Sigmoid colon (tissue), 7 donors: ENCODE measurements at regions of chr4 and their contacts with region 1.

Region 1: GRCh38 chr4:185471235-185472102 is at the start of gene CCDC110:
- DNase-seq: peak; percentile 99
- H3K4me3 ChIP-seq: peak within 1 kb of the TSS; percentile 52 to 95 (median 78)
- H3K27ac ChIP-seq: peak within 1 kb of the TSS; percentile 73 to 81 (median 77)
- H3K4me1 ChIP-seq: peaks cover 0 to 14% (median 7%) of the 10 kb centered on the region in 4 donors
- H3K27me3 ChIP-seq: no peaks in the 10 kb centered on the region
- CTCF ChIP-seq: peak; percentile 25 to 77 (median 46)
- EP300 ChIP-seq: no peak
- POLR2A ChIP-seq: no peak
- total RNA-seq, gene CCDC110: 1.6 to 9.3 (median 7.2) TPM

Region 2: DNA sequence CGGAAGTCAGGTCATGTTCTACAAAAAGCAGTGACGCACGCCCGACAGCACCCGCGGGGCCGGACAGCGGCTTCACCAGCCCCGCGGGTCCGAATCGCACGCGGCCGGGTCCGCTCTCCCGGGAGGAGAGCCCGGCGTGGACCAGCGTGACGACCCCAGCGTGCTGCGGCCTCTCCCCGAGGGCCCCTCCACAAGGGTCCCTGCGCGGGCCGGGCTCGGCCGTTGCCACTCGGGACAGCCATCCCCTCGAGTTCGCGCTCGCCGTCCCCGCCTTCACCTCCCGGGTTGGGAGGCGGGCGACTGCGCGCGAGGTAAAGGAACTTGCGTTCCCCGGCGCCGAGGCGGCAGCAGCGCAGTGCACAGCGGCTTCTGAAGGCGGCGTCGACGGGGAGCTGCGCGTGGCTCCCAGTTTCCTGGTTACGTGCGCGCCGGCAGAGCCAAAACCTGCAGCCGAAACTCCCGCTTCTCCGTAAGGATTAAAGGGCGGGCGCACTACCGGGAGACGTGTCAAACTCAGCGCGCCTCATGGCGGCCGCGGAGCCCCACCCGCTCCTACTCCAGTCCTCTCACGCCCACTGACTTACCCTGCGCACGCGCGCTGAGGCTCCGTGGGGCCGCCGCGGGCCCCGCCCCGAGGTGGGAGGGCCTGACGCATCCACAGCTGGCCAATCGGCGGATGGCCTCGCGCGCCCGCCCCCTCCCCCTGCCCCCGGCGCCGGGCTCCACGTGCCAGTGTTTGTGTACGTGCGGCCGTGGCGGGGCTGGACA is 75.3 kb before region 1 on chr4:
- intact Hi-C with region 1: no loop called
- DNase-seq: peak; percentile 99
- H3K4me3 ChIP-seq: peak overlapping the region; percentile 55 to 80 (median 72)
- H3K27ac ChIP-seq: peak overlapping the region; percentile 94 to 100 (median 98)
- H3K4me1 ChIP-seq: peaks cover 0 to 38% (median 11%) of the 10 kb centered on the region in 4 donors
- H3K27me3 ChIP-seq: no peaks in the 10 kb centered on the region
- CTCF ChIP-seq: no peak
- EP300 ChIP-seq: peak in 3 of 4 donors; percentile 70 to 94 (median 85)
- POLR2A ChIP-seq: peak; percentile 59 to 65

Region 3: DNA sequence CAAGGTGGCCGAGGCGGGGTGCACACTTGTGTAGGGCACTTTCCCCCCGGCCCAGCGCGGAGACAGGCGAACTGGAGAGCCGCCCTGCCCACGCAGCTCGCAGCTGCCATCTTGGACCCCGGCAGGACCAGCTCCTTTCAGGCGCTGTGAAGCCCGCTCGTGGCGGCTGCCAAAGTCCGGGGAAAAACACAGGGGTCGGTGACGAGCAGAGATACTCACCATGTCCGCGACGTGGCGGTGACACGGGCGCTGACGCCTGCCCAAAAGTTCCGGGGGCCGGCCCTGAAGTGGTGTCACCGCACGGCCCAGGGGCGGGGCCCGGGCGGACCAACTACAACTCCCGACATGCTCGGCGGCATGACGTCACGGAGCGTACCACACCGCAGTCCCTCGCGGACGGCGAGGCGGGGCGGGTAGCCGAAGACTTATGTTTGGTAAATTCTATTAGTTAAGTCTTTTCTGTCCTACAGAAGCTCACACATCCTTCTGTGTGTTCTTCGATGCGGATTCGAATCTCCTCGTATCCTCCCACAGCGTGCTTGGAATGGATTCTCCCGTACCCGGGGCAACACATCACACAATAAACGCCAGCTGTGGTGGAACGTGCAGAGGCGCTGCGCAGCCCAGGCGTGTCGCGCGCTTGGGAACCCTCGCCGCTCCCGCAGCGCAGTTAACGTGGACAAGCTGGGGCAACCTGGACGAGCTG is 45.7 kb before region 1 on chr4 and contains the start of gene UFSP2:
- intact Hi-C with region 1: loop called (anchors 5 kb)
- DNase-seq: peak; percentile 95
- H3K4me3 ChIP-seq: peak within 1 kb of the TSS; percentile 57 to 84 (median 73)
- H3K27ac ChIP-seq: peak within 1 kb of the TSS; percentile 91 to 95 (median 92)
- H3K4me1 ChIP-seq: peaks cover 0 to 41% (median 19%) of the 10 kb centered on the region in 4 donors
- H3K27me3 ChIP-seq: no peaks in the 10 kb centered on the region
- CTCF ChIP-seq: no peak
- EP300 ChIP-seq: peak in 2 of 4 donors; percentile 43 to 56
- POLR2A ChIP-seq: peak; percentile 64 to 70
- total RNA-seq, gene UFSP2: 31.3 to 56.0 (median 48.6) TPM

Region 4: GRCh38 chr4:185534866-185535611 is 63.6 kb after region 1 on chr4 and contains the start of gene PDLIM3:
- intact Hi-C with region 1: loop called (anchors 5 kb)
- DNase-seq: peak; percentile 89
- H3K4me3 ChIP-seq: peak within 1 kb of the TSS; percentile 67 to 91 (median 82)
- H3K27ac ChIP-seq: peak within 1 kb of the TSS; percentile 95 to 99 (median 97)
- H3K4me1 ChIP-seq: peaks cover 0 to 45% (median 23%) of the 10 kb centered on the region in 4 donors
- H3K27me3 ChIP-seq: peaks cover 0 to 10% (median 0%) of the 10 kb centered on the region in 3 donors
- CTCF ChIP-seq: no peak
- EP300 ChIP-seq: peak in 1 of 4 donors; percentile 43
- POLR2A ChIP-seq: peak; percentile 90 to 93
- total RNA-seq, gene PDLIM3: 568 to 907 (median 820) TPM

Region 5: DNA sequence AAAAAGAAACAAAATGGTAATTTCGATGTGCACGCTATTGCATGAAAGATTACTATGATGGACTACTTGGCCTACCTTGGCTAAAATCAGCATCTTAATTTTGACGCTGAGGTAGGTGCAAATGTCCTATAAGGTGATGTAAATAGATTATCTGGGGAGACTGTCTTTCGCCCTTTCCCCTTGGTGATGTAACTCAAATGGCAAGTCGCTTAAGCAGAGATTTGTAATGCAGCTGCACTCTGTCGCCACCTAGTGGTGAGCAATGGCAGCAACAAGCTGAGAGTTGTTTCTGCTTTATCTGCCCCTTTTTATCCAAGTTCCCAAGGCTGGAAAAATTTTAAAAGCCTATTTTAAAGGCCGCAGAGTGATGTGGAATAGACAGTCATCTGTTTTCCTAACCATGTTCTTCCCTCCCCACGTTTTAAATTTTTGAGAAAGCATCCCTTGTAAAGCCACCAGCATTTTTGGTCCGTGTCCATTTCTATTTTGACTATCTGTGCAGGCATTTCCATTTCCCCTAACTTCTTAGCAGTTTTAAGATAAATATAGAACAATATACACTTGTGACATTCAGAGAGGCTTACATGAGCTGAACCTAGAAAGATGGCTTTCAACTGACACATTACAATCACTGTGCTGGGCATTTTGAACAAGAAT is 126.2 kb after region 1 on chr4:
- intact Hi-C with region 1: loop called (anchors 1 kb)
- DNase-seq: peak; percentile 89
- H3K4me3 ChIP-seq: no peak overlapping the region
- H3K27ac ChIP-seq: peak overlapping the region; percentile 44 to 82 (median 76)
- H3K4me1 ChIP-seq: peaks cover 0 to 36% (median 25%) of the 10 kb centered on the region in 4 donors
- H3K27me3 ChIP-seq: no peaks in the 10 kb centered on the region
- CTCF ChIP-seq: peak; percentile 97 to 99 (median 98)
- EP300 ChIP-seq: no peak
- POLR2A ChIP-seq: no peak

Region 6: GRCh38 chr4:185773419-185773818 is 301.9 kb after region 1 on chr4:
- intact Hi-C with region 1: no loop called
- DNase-seq: peak; percentile 85
- H3K4me3 ChIP-seq: peak overlapping the region; percentile 8 to 42 (median 34)
- H3K27ac ChIP-seq: peak overlapping the region; percentile 74 to 87 (median 79)
- H3K4me1 ChIP-seq: peaks cover 0 to 42% (median 25%) of the 10 kb centered on the region in 4 donors
- H3K27me3 ChIP-seq: no peaks in the 10 kb centered on the region
- CTCF ChIP-seq: no peak
- EP300 ChIP-seq: peak in 3 of 4 donors; percentile 75 to 85 (median 77)
- POLR2A ChIP-seq: peak in 1 of 2 donors; percentile 30